AG04449 (cell line): ENCODE measurements at regions of chr18 and their contacts with region 1.

Region 1: DNA sequence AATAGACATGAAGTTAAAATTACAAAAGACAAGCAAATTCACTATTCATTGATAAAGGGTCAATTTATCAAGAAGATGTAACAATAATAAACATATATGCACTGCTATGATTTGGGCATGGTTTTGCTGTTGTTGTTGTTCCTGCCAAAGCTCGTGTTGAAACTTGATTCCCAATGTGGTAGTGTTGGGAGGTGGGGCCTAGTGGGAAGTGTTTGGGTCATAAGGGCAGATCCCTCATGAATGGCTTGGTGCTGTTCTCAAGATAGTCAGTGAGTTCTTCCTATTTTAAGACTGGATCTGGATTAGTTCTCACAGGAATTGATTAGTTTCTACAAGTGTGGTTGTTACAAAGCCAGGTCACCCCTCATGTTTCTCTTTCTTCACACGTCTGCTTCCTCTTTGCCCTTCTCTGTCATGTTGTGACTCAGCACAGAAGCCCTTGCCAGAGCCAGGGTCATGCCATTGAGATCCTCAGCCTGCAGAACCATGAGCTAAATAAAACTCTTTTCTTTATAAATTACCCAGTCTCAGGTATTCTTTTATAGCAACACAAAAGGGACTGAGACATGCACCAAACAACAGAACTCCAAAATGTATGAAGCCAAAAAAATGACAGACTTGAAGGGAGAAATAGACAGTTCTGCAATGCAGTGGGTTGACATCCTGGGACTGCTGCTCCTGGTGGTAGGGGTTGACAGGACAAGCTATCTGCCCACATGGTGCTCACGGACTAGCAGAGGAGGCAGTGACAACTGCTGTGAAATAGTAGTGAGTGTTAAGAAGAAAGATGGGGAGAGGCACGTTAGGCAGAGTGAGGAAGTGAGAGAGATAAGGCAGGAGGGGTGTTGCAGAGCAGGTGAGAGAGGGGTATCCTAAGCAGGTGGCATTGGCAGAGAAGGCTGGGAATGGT is 18.6 kb upstream of the SKA1 start:
- DNase-seq: no peak
- H3K4me3 ChIP-seq: no peak overlapping the region
- CTCF ChIP-seq: no peak

Region 2: DNA sequence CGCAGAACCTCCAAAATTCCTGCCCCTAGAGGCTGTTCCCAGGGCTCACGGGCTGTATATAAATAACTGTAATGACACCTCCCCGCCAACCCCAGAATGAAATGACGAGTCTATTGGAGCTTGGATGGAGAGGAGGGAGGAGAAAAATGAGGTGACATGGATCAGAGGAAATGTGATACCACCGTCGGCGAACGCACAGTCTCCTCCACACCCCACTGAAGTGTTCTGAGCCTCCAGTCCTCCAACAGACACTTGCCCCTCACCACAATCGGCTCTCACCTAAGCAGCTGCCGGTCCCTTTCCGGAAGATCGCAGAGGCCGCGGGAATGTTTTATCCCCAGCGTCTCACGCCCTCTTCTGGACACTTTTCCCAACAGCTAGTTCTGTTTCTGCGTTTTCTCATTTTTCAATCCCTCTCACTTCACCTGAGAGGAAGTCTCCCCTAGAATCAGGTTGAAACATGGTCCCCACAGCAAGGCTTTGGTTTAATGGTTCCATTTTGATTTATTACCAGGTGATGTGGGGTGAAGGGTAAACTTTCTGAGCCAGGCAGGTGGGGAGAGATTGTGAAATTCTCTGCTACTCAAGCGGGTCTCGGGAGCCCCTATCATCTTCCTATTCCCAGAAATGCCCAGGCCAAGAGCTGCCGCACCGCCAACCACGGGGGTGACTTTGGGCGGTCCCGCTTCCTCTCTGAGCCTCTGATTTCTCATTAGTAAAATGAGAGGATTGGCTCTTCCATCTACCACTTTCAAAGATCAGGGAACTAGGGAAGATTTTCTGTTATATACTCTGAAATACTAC is 152.3 kb before region 1 on chr18:
- CTCF ChIA-PET with region 1: interaction called, 17 read pairs
- POLR2A ChIA-PET with region 1: no interaction called
- DNase-seq: no peak
- H3K4me3 ChIP-seq: no peak overlapping the region; the same call in 1 of the 2 replicates
- CTCF ChIP-seq: peak; percentile 59

Region 3: DNA sequence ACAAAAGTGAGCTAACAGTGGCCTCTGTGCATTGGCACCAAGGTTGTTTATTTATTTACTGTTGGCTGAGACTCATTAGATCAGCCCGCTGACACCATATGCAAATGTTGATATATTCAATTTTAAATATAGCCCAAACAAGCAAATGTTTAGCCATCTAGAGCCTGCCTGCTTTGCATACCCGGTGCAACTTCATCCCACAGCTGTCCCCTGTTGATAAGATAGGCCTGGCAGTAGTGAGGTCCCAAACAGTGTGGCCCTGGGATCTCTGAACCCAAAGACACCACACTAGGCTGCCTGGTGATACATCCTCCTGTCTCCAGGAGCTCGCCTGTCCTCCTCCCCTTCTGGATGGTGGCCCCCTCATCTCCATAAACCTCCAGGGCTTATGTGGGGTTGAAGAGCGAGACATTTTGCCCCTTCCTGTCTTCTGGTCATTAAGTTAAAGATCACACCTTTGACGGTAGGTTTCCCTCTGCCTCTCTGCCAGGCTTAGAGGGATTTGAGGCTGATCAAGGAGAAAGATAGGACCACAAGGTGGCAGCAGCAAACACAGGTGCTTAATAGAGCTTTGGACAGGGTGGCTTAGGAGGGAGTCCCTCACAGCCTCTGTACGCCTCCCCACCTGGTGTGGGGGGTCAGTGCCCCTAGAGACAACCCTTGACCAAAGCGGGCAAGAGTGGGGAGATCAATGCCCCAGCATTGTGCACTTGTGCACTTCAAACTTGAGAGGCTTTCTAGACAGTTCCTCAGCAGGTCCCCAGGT is 137.7 kb before region 1 on chr18:
- CTCF ChIA-PET with region 1: interaction called, 34 read pairs
- POLR2A ChIA-PET with region 1: no interaction called
- DNase-seq: no peak
- H3K4me3 ChIP-seq: no peak overlapping the region
- CTCF ChIP-seq: no peak

Region 4: GRCh38 chr18:50289108-50289443 is 67.2 kb before region 1 on chr18:
- CTCF ChIA-PET with region 1: interaction called, 10 read pairs
- POLR2A ChIA-PET with region 1: no interaction called
- DNase-seq: no peak
- H3K4me3 ChIP-seq: no peak overlapping the region
- CTCF ChIP-seq: no peak

Region 5: DNA sequence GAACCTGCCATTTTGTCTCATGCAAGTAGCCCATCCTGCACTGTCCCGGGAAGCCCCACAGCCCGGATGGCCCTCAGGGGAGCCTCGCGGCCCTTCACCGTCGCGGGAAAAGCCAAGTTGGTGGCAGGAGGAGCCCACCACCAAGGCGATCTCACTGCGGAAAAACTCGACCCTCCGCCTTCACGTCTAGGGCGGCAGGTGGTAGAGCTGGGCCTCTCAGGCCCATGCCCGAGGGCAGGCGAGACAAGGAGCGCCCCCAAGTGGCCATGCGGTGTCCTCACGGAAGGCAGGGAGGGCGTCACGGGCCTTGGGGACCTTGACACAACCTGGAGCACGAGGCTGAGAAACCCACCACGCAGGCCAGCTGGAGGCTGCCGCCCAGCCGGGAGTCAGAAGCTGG is 16.2 kb before region 1 on chr18:
- CTCF ChIA-PET with region 1: interaction called, 11 read pairs
- POLR2A ChIA-PET with region 1: no interaction called
- DNase-seq: no peak
- H3K4me3 ChIP-seq: no peak overlapping the region
- CTCF ChIP-seq: no peak

Region 6: GRCh38 chr18:50374753-50375391 is 18.6 kb after region 1 on chr18 and contains the start of gene SKA1:
- CTCF ChIA-PET with region 1: interaction called, 33 read pairs
- POLR2A ChIA-PET with region 1: interaction called, 5 read pairs
- DNase-seq: peak; percentile 23
- H3K4me3 ChIP-seq: peak within 1 kb of the TSS; percentile 94
- CTCF ChIP-seq: no peak

Region 7: DNA sequence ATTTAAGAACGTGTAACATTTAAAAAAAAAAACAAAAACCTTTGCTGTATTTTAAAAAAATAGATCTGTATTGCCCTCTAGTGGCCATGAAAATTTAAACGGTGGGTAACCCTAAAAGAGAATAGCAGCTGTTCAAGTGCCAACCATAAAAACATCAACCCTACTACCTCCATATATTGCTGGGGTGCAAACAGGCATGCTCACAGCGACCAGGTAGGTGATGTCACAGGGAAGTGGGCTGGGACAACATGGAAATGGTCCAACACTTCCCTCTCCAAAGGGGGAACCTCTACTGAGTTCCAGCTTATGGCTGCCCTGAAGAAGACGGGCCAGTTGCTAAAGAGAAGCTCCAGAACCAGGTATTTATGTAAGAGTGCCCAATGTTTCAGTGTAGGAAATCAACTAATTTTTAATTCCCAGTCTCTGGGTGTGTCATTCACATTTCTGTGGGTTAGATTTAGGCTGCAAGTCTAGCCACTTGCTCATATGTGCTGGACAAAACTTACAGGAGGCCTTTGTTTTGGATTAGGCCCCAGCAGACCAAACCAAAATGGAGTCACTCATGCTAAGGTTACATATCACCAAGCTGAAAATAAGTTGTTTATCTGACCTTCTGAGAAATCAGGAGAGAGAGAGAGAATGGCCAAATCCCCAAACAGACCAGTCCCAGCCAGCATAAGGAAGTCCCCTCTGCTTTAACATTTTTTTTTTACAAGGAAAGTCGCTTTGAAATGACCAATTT is 73.1 kb after region 1 on chr18:
- CTCF ChIA-PET with region 1: interaction called, 15 read pairs
- POLR2A ChIA-PET with region 1: no interaction called
- DNase-seq: no peak
- H3K4me3 ChIP-seq: no peak overlapping the region
- CTCF ChIP-seq: peak; percentile 5